ENCODE measurements at regions of chr6 and their contacts with region 1.

Region 1: GRCh38 chr6:147135211-147135681 is 69.0 kb upstream of the STXBP5 start:
- DNase-seq: peak; percentile 99
- H3K4me3 Mint-ChIP-seq: no peak overlapping the region
- H3K27ac Mint-ChIP-seq: peak overlapping the region; percentile 53
- H3K4me1 Mint-ChIP-seq: peaks cover 18% of the 10 kb centered on the region
- H3K27me3 Mint-ChIP-seq: no peaks in the 10 kb centered on the region
- CTCF ChIP-seq: no peak

Region 2: GRCh38 chr6:147154454-147154853 is 19.2 kb after region 1 on chr6:
- CTCF ChIA-PET with region 1: interaction called, 3 read pairs
- POLR2A ChIA-PET with region 1: interaction called, 25 read pairs
- intact Hi-C with region 1: no loop called
- DNase-seq: peak; percentile 81
- H3K4me3 Mint-ChIP-seq: peak overlapping the region; percentile 43
- H3K27ac Mint-ChIP-seq: peak overlapping the region; percentile 90
- H3K4me1 Mint-ChIP-seq: peaks cover 52% of the 10 kb centered on the region
- H3K27me3 Mint-ChIP-seq: no peaks in the 10 kb centered on the region
- CTCF ChIP-seq: no peak

Region 3: DNA sequence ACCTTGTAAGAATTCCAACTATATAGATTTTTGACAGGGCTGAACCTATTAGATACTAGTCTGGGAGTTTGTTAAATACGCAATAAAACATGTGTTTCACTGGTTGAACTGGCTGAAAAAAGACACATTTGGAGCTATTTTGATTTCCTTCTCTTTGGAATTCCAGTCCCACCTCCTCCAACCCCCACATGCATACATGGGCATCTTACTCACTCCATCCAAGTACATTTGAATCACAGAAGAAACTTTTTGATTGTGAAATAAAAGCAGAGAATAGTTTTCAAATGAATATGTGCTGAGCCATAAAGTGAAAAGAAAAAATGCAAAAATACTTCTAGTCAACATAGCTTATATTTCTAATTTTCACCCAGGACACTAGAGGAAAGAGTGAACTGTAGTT is 35.0 kb after region 1 on chr6:
- CTCF ChIA-PET with region 1: no interaction called
- POLR2A ChIA-PET with region 1: interaction called, 10 read pairs
- intact Hi-C with region 1: no loop called
- DNase-seq: peak; percentile 84
- H3K4me3 Mint-ChIP-seq: no peak overlapping the region
- H3K27ac Mint-ChIP-seq: peak overlapping the region; percentile 94
- H3K4me1 Mint-ChIP-seq: peaks cover 16% of the 10 kb centered on the region
- H3K27me3 Mint-ChIP-seq: no peaks in the 10 kb centered on the region
- CTCF ChIP-seq: no peak